ENCODE measurements at regions of chr2 and their contacts with region 1.

Region 1: DNA sequence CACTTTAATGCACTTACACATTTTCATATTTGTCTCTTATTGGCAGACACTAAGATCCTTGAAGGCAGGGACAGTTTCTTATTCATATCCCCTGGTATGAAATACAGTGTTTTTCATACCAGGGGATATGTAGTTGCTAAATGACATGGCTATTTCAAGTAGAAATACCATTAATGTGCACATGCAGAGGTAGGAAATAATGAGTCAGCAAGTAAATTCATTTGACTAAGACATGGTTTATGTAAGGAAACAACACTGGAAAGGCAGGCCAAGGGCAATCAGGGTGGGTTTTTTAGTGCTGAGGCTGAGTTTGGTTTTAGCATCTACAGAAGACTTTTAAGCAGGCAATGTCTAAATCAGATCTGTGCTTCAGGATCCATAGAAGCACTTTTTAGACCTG is 155.9 kb downstream of the WDPCP start:
- DNase-seq: no peak
- H3K4me3 ChIP-seq: no peak overlapping the region
- H3K27ac ChIP-seq: no peak overlapping the region
- H3K4me1 ChIP-seq: peaks cover 7% of the 10 kb centered on the region; the same call in 1 of the 2 replicates
- H3K27me3 ChIP-seq: no peaks in the 10 kb centered on the region
- CTCF ChIP-seq: no peak

Region 2: DNA sequence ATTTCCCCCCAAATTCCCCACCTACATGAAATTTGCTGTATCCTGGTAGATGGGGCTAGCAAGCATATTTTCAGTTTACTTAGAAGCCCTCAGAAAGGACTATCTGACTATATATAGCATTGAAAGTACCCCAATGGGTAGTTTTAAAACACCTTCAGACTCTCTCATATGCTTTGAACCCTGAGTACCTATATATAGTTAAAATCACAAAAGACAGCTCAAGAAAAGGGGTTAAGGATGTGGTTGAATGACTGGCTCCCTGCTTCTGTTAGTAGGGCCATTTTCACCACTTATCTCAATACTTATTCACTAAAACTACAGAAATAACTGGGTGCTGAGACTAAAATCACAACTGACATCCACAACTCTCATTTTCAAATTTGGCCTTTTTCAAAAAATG is 137.4 kb after region 1 on chr2:
- CTCF ChIA-PET with region 1: no interaction called
- POLR2A ChIA-PET with region 1: no interaction called
- intact Hi-C with region 1: loop called (anchors 10 kb)
- DNase-seq: no peak
- H3K4me3 ChIP-seq: no peak overlapping the region
- H3K27ac ChIP-seq: no peak overlapping the region
- H3K4me1 ChIP-seq: no peaks in the 10 kb centered on the region
- H3K27me3 ChIP-seq: no peaks in the 10 kb centered on the region
- CTCF ChIP-seq: no peak

Measured in PC-9 (cell line).